WTC11 (cell line): ENCODE measurements at regions of chr9 and their contacts with region 1.

Region 1: DNA sequence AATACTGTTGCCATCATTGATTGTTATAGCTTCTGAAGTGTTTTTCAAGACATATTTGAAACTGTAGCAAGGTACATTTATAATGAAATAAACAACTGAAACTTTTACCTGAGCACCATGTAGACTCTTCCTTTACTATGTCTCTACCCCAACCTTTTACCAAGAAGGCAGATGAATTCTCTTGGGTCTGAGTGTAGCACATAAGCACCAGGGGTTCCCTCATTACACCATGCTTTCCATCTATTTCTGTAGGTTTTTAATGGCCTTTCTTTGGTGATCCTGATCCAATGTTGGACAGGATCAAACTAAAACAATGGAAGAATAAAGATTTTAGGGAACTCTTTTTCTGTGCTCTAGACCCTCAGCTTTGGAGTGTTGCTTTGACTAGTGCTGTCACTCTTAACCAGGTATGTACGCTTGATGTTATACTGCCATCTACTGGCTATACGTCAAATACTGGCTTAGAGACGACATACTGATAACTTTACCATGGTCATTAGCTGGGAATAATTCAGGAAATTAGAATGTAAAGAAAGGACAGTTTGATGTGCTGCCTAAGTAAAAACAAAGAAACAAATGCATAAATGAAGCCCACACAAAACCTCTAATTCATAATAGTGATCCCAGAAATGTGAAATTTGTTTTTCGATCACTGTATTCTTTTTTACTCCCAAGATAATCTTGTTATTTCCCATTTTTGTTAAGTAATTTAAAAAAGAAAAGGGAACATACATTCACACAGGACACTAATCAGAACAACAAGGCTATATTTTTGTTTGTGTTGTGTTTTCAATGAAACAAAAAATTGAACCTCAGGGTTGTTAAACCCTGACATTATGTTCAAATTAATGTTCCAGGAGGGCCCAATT is 30.7 kb downstream of the IFNW1 start:
- DNase-seq: no peak
- ATAC-seq: peak; percentile 96
- H3K4me3 Mint-ChIP-seq: no peak overlapping the region
- H3K27ac Mint-ChIP-seq: no peak overlapping the region
- H3K4me1 Mint-ChIP-seq: no peaks in the 10 kb centered on the region
- H3K27me3 Mint-ChIP-seq: no peaks in the 10 kb centered on the region
- CTCF ChIP-seq: peak; percentile 66

Region 2: GRCh38 chr9:20884985-20885593 is 225.9 kb before region 1 on chr9:
- CTCF ChIA-PET with region 1: interaction called, 18 read pairs
- POLR2A ChIA-PET with region 1: no interaction called
- DNase-seq: peak; percentile 65
- ATAC-seq: peak; percentile 58
- H3K4me3 Mint-ChIP-seq: no peak overlapping the region
- H3K27ac Mint-ChIP-seq: no peak overlapping the region
- H3K4me1 Mint-ChIP-seq: no peaks in the 10 kb centered on the region
- H3K27me3 Mint-ChIP-seq: no peaks in the 10 kb centered on the region
- CTCF ChIP-seq: peak; percentile 53

Region 3: GRCh38 chr9:20948703-20949102 is 162.2 kb before region 1 on chr9:
- CTCF ChIA-PET with region 1: interaction called, 11 read pairs
- POLR2A ChIA-PET with region 1: no interaction called
- DNase-seq: no peak
- ATAC-seq: peak; percentile 97
- H3K4me3 Mint-ChIP-seq: peak overlapping the region; percentile 10; the same call in 1 of the 2 replicates
- H3K27ac Mint-ChIP-seq: 0 out of 2 replicates have a peak overlapping the region, but pooled peaks have one; percentile 14
- H3K4me1 Mint-ChIP-seq: peaks cover 52% of the 10 kb centered on the region
- H3K27me3 Mint-ChIP-seq: no peaks in the 10 kb centered on the region
- CTCF ChIP-seq: no peak

Region 4: DNA sequence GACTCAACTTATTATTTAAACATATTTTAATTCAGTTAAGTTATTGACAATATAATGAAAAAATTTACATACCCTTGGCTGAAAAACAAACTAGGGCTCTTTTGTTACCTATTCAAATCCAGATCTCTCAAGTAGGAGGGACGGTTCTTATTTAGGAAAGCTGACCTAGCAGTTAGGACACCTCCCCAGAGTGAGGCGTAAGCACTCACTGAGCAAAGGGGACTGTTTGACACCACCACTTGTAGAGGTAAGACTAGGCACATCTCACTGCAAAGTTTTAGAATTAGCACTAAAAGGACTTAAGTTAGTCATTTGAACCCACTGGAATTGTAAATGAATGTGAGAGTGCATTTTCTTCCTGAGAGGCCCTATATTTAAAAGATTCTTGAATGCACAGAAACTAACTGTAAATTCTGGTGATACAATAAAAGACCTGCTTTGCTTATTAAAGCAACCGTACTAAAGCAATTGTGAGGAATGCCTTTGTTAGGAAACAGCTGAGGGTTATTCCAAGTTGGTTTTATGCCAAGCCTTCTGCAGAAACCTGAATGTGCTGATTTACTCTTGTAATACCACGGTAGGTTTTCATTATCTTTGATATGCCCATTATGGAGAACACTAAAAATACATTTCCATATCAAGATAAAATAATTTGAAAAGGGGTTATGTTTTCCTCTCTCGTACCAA is 95.7 kb before region 1 on chr9:
- CTCF ChIA-PET with region 1: interaction called, 10 read pairs
- POLR2A ChIA-PET with region 1: no interaction called
- DNase-seq: no peak
- ATAC-seq: peak; percentile 93
- H3K4me3 Mint-ChIP-seq: no peak overlapping the region
- H3K27ac Mint-ChIP-seq: peak overlapping the region; percentile 45; the same call in 1 of the 2 replicates
- H3K4me1 Mint-ChIP-seq: peaks cover 41% of the 10 kb centered on the region
- H3K27me3 Mint-ChIP-seq: no peaks in the 10 kb centered on the region
- CTCF ChIP-seq: no peak

Region 5: DNA sequence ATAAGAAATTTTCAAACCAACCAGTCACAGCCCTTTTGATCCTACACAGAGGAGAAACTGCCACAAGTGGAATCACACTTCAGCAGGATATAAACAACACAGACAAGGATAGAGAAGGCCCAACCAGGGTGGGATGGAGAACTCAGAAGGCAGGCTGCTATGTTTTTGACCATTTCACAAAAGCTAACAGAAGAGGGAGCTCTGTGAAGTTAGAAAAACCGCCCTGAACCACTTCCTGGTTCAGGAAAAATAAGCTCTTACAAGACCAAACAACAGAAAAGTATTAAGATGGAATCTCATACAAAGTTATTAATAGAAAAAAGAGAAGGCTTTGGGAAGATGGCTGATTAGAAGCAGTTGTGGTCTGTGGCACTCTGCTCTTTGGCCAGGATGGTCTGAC is 32.2 kb before region 1 on chr9:
- CTCF ChIA-PET with region 1: interaction called, 18 read pairs
- POLR2A ChIA-PET with region 1: interaction called, 3 read pairs
- DNase-seq: no peak
- ATAC-seq: peak; percentile 58
- H3K4me3 Mint-ChIP-seq: no peak overlapping the region
- H3K27ac Mint-ChIP-seq: no peak overlapping the region
- H3K4me1 Mint-ChIP-seq: peaks cover 8% of the 10 kb centered on the region
- H3K27me3 Mint-ChIP-seq: no peaks in the 10 kb centered on the region
- CTCF ChIP-seq: no peak

Region 6: GRCh38 chr9:21210311-21210710 is 99.4 kb after region 1 on chr9:
- CTCF ChIA-PET with region 1: no interaction called
- POLR2A ChIA-PET with region 1: no interaction called
- DNase-seq: no peak
- ATAC-seq: no peak
- H3K4me3 Mint-ChIP-seq: no peak overlapping the region
- H3K27ac Mint-ChIP-seq: no peak overlapping the region
- H3K4me1 Mint-ChIP-seq: no peaks in the 10 kb centered on the region
- H3K27me3 Mint-ChIP-seq: peaks cover 5% of the 10 kb centered on the region; the same call in 1 of the 2 replicates
- CTCF ChIP-seq: no peak